Gastrocnemius medialis (tissue), 4 donors: ENCODE measurements at regions of chr10 and their contacts with region 1.

Region 1: DNA sequence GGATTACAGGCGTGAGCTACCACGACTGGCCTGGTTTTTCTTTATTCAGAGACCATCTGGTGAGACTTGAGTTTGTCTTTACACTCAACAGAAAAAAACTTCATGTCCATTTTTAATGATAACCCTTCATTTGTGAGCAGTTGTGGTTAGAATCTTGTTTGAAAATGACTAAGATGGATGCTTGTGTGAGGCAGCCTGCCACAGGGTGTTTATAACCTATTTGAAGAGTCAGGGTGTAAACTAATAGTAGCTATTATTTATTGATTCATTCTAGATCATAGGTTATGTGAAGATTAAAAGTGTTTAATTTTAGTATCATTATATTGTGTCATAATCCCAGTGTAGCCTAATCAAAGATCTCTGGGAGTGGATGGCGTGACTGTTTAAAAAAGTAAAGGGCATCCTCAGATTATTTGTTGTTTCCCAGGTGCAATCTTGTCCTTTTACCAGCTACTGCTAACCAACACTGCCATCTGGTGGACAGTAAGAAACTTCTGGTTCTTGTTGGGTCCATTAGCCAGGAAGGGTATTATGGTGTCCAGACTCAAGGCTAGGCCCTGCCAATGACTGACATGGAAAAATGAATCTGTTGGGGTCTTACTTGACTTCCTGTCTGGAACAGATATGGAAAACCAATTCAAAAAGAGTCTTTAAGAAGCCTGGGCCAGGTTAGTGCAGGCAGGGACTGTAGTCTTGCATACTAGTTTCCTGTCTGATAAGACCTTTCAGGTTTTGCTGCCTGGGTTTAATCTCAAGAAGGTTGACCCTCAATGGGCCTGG is 24.9 kb downstream of the NRBF2 start:
- DNase-seq: no peak
- ATAC-seq: peak; percentile 76 to 88
- H3K4me3 ChIP-seq: no peak overlapping the region
- H3K27ac ChIP-seq: no peak overlapping the region
- H3K4me1 ChIP-seq: peaks cover 7 to 13% of the 10 kb centered on the region in 2 donors
- H3K27me3 ChIP-seq: no peaks in the 10 kb centered on the region
- CTCF ChIP-seq: peak; percentile 80 to 84 (median 83)
- POLR2A ChIP-seq: no peak

Region 2: DNA sequence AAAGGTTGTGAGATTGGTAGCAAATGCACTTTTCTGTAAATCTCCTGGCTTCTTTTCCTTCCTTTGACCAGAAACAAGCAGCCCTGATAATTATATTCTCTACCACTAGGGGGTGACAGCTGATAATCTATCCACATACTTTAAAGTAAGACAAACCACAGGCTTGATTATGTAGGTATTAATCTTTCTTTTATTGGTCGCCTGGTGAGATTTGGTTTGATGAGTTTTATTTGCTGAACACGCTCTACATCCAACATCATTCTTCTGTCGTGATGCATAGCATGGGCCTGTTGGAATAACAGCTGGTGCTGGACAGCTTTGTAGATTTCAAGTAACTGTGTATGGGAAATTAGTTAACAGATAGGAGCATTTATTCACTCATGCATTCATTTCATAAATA is 720.3 kb before region 1 on chr10:
- in situ Hi-C with region 1: loop called (anchors 5 to 25 kb)
- intact Hi-C with region 1: loop called (anchors 2 kb)
- DNase-seq: no peak
- ATAC-seq: peak in 1 of 2 donors; percentile 60
- H3K4me3 ChIP-seq: no peak overlapping the region
- H3K27ac ChIP-seq: no peak overlapping the region
- H3K4me1 ChIP-seq: peaks cover 0 to 3% of the 10 kb centered on the region in 2 donors
- H3K27me3 ChIP-seq: no peaks in the 10 kb centered on the region
- CTCF ChIP-seq: peak; percentile 57 to 77 (median 64)
- POLR2A ChIP-seq: no peak

Region 3: DNA sequence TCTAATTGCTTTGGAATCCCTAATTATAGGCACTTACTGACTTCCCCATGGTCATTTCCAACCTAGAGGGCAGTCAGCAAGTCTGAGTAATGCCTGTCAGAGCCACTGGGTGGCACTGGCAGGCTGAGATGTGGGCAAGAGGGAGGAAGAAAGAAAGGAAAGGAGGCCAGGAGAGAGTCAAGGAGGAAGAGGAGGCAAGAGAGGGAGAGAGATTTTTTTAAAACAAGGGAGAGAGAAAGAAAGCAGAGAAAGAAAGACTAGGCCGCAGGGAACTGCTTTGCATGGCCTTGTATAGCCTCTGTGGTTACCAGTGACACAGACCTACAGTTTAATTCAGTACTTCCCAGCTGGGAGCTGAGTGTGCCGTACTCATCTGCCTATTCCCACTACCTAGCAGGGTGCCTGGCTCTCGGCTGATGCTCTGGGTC is 563.9 kb before region 1 on chr10:
- in situ Hi-C with region 1: loop called (anchors 10 to 25 kb)
- intact Hi-C with region 1: loop called (anchors 1 kb)
- DNase-seq: peak; percentile 12 to 27
- ATAC-seq: peak; percentile 74 to 88
- H3K4me3 ChIP-seq: no peak overlapping the region
- H3K27ac ChIP-seq: no peak overlapping the region
- H3K4me1 ChIP-seq: no peaks in the 10 kb centered on the region
- H3K27me3 ChIP-seq: no peaks in the 10 kb centered on the region
- CTCF ChIP-seq: peak; percentile 61 to 76 (median 73)
- POLR2A ChIP-seq: no peak

Region 4: DNA sequence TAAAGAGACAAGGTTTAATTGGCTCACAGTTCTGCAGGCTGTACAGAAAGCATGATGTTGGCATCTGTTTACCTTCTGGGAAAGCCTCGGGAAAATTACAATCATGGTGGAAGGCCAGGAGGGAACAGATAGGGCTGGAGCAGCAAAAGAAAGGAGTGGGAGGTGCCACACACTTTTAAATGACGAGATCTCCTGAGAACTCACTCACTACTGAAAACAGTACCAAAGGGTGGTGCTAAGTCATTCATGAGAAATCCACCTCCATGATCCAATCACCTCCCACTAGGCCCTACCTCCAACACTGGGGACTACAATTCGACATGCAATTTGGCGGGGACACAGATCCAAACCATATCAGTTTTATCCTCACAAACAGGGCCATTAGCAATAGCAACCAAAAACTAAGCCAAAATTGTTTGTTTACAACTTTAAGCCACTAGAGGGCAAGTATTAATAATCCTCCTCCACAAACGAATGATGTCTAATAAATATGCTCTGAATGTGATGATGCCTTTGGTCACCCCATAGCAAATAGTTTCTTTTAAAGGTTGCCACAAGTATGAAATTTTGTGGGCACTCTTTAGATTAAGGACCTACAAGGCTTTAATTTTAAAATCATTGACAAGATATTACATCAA is 154.1 kb before region 1 on chr10:
- in situ Hi-C with region 1: loop called (anchors 5 to 25 kb)
- intact Hi-C with region 1: loop called (anchors 5 kb)
- DNase-seq: no peak
- ATAC-seq: no peak
- H3K4me3 ChIP-seq: no peak overlapping the region
- H3K27ac ChIP-seq: no peak overlapping the region
- H3K4me1 ChIP-seq: no peaks in the 10 kb centered on the region
- H3K27me3 ChIP-seq: no peaks in the 10 kb centered on the region
- CTCF ChIP-seq: peak in 2 of 5 experiments; percentile 16 to 36
- POLR2A ChIP-seq: no peak

Region 5: GRCh38 chr10:63297941-63298340 is 139.9 kb after region 1 on chr10:
- in situ Hi-C with region 1: no loop called
- intact Hi-C with region 1: no loop called
- DNase-seq: no peak
- ATAC-seq: no peak
- H3K4me3 ChIP-seq: no peak overlapping the region
- H3K27ac ChIP-seq: no peak overlapping the region
- H3K4me1 ChIP-seq: peaks cover 0 to 11% of the 10 kb centered on the region in 2 donors
- H3K27me3 ChIP-seq: no peaks in the 10 kb centered on the region
- CTCF ChIP-seq: no peak
- POLR2A ChIP-seq: no peak